HEK293T (cell line): ENCODE measurements at regions of chr17 and their contacts with region 1.

Region 1: GRCh38 chr17:9971991-9972599 is 67.0 kb upstream of the RCVRN start:
- DNase-seq: peak; percentile 26

Region 2: DNA sequence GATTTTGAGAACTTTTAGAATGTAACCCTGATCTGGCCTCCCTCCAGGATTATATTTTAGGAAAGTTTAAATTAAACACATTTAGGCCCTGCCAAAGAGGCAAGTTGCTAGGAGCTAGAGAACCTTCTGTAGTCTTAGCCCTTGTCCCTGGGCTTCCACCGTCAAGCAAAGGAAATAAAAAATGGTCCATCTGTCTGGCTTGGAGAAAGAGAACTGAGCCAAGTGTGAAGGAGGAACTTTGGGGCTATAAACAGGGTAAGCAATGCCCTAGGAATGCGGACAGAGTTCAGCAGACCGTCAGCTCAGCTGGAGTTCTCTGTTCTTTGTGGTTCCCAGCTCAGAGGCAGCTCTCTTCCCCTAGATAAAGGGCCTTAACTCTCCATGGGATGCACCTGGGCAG is 96.7 kb before region 1 on chr17:
- CTCF ChIA-PET with region 1: no interaction called
- POLR2A ChIA-PET with region 1: no interaction called
- DNase-seq: no peak

Region 3: DNA sequence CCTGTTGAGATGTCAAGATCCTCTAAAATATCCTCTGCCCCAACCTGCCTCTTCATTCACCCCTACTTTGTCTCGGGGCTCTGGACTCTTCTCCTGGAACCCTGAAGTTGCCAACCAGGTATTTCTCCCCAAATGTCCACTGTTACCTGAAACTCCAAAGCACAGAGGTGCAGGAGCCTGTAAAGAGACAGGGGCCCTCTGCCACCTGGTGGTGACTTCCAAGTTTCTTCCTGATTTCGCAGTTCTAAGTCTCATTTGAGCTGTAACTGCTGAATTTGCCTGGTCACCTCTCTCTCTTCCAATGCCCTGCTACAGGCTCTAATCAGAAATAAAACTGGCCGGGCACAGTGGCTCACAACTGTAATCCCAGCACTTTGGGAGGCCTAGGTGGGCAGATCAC is 10.1 kb after region 1 on chr17:
- CTCF ChIA-PET with region 1: interaction called, 10 read pairs
- POLR2A ChIA-PET with region 1: no interaction called
- DNase-seq: peak; percentile 23

Region 4: DNA sequence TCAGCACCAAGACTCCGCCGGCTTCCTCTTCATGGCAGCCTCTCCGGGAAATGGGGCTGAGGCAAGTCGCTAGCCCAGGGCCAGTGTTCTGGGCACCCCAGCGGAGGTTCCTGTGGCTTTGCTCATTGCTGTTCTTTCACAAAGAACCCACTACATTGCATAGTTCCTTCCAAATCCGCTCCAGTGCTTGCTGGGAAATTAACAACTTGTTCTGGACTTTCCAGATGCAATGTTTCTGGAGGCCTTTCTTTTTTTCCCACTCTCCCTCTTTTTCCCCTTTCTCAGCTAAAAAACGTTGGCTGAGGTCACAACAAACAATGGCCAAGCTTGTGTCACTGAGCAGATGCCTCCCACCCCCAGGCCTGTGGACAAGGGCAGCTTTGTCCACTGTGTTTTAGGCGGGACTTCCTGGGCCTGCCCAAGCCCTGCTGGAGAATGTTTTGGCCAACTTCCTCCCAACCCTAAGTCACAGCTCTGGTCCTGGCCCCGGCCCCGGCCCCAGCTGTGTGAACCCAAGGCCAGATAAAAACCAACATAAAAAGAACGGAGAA is 64.5 kb after region 1 on chr17:
- CTCF ChIA-PET with region 1: no interaction called
- POLR2A ChIA-PET with region 1: no interaction called
- DNase-seq: no peak